IMR-90 (cell line): ENCODE measurements at regions of chr18 and their contacts with region 1.

Region 1: GRCh38 chr18:39571511-39571910 is 2005.9 kb upstream of the CELF4 start:
- DNase-seq: peak; percentile 19
- ATAC-seq: no peak
- H3K4me3 ChIP-seq: no peak overlapping the region
- H3K27ac ChIP-seq: no peak overlapping the region
- H3K4me1 ChIP-seq: no peaks in the 10 kb centered on the region
- H3K27me3 ChIP-seq: no peaks in the 10 kb centered on the region
- CTCF ChIP-seq: peak; percentile 38
- POLR2A ChIP-seq: no peak
- RAD21 ChIP-seq: peak; percentile 52

Region 2: DNA sequence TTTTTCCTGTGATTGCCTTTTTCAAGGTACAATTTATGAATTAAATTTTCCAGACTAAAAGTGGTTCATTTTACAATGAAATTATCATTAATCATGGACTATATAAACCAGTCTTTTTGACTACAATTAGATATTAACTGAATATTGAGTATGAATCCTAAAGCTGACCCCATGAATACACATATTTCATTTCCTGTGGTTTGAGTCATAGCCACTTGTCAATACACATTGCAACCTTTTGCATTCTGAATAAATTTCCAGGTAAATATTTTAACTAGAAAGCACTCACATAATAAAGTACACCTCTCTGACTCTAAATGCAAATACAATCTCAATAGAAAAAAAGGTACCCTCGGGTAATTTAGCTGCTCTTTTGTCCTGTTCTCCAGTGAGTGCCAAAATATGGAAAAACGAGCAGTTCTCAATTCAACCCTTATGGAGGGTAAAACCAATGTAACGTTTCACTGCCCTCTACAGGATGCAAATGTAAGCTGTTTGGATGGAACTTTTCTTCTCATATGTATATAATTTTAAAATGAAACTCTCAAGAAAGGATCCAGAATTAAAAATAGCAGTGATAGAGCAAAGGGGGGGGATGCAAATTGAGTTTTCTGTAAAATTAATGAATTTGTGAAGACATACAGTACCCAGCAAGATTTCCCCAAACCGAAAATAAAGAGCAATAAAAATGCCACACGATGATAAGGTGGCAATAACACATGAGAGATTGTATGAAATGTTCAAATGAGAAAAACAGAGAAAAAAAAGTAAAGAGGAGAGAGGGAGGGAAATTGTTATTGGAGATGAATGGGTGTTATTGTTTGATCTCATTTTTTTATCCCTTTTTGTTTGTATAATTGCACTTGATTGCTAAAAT is 587.9 kb after region 1 on chr18:
- CTCF ChIA-PET with region 1: no interaction called
- POLR2A ChIA-PET with region 1: no interaction called
- dilution Hi-C with region 1: no loop called
- in situ Hi-C with region 1: no loop called
- intact Hi-C with region 1: loop called (anchors 10 kb)
- DNase-seq: peak; percentile 40
- ATAC-seq: peak; percentile 64
- H3K4me3 ChIP-seq: no peak overlapping the region
- H3K27ac ChIP-seq: no peak overlapping the region
- H3K4me1 ChIP-seq: no peaks in the 10 kb centered on the region
- H3K27me3 ChIP-seq: no peaks in the 10 kb centered on the region
- CTCF ChIP-seq: peak; percentile 54
- POLR2A ChIP-seq: no peak
- RAD21 ChIP-seq: peak; percentile 51